ENCODE measurements at regions of chr12 and their contacts with region 1.

Region 1: DNA sequence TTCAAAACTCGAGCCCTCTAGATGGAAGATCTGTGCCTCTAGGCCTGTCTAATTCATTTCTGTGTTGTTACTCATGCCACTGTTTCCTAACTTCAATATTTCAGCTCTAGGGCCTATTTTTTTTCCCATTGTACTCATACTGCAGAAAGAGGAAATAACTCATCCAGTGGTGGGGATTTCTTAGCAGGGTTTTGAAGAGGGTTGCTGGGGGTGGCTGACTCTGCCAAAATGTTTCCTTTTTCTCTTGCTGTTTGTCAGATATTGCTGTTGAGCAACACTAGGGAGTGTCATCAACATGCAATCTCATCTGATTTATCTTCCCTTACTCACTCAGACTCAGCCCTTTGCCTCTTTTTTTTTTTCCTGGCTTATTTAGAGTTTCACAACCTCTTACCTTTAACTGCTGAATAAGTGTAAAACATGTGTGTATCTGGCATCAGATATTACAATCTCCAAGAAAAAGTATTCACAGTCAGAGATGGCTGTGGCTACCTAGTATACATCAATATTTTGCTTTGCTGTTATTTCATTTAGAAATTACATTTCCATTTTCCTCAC is 189.5 kb downstream of the DUSP6 start:
- DNase-seq: peak; percentile 59
- H3K4me3 Mint-ChIP-seq: no peak overlapping the region
- H3K27ac Mint-ChIP-seq: no peak overlapping the region
- H3K4me1 Mint-ChIP-seq: peaks cover 23% of the 10 kb centered on the region
- H3K27me3 Mint-ChIP-seq: no peaks in the 10 kb centered on the region

Region 2: DNA sequence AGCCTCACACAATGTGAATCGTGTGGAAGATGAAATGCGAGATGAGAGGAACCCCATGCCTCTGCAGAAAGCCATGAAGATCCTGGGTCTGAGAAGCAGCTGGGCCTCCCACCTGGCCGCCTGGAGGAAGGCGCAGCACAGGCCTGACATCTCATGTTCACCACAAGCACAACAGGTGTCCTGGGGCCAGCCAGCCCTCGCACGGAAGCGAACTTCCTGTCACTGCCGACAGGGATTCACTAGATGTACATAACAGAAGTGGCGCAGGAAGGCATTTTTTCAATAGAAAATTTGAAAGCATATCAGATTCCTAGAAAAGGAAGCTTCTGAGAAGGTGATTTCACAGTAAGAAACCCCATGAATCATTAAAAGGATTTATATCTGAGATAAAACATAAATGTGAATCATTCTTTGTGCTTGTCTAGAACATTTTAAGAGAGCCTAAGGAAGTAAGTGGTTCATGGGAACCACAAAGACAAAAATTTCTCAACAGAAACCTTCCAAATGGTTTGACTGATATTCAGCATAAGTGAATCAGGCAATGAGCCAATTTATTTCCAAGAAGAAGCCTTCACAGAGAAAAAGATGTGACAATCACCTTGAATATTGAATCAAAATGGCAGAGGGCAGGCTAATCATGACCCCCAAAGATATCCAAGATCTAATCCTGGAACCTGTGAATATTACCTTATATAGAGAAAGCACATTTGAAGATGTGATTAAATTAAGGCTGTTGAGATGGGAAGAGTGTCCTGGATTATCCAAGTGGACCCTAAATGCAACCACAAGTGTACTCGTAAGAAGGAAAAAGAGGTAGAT is 122.4 kb before region 1 on chr12:
- intact Hi-C with region 1: loop called (anchors 1 kb)
- DNase-seq: peak; percentile 79
- H3K4me3 Mint-ChIP-seq: peak overlapping the region; percentile 61
- H3K27ac Mint-ChIP-seq: peak overlapping the region; percentile 95
- H3K4me1 Mint-ChIP-seq: peaks cover 65% of the 10 kb centered on the region
- H3K27me3 Mint-ChIP-seq: no peaks in the 10 kb centered on the region

Region 3: DNA sequence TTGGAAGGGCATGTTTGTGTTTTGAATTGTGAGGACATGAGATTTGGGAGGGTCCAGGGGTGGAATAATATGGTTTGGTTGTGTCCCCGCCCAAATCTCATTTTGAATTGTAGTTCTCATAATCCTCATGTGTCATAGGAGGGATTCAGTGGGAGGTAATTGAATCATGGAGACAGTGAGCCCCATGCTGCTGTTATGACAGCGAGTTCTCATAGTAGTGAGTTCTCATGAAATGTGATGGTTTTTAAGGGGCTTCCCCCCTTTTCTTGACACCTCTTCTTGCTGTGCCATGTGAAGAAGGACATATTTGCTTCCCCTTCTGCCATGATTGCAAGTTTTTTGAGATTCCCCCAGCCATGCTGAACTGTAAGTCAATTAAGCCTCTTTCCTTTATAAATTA is 70.5 kb before region 1 on chr12:
- intact Hi-C with region 1: loop called (anchors 2 kb)
- DNase-seq: no peak
- H3K4me3 Mint-ChIP-seq: no peak overlapping the region
- H3K27ac Mint-ChIP-seq: peak overlapping the region; percentile 25
- H3K4me1 Mint-ChIP-seq: no peaks in the 10 kb centered on the region
- H3K27me3 Mint-ChIP-seq: no peaks in the 10 kb centered on the region

Region 4: DNA sequence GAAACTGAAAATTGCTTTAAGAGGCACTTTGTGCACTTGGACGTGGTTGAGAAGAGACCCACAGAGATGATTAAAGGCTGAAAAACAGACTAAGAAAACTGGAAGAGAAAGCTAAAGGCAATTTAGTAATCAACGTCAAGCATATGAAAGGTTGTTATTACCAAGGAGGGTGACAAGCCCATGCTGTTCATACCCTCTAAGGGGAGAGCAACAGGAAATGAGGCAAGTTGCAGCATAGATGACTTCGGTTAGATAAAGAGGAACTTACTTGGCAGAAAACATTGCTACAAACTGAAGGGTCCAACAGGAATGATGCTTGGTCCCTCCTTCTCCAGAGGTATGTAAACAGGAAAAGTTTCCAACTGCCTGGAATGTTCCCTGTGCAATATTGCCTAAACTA is 81.8 kb after region 1 on chr12:
- intact Hi-C with region 1: loop called (anchors 1 kb)
- DNase-seq: peak; percentile 45
- H3K4me3 Mint-ChIP-seq: peak overlapping the region; percentile 32
- H3K27ac Mint-ChIP-seq: peak overlapping the region; percentile 84
- H3K4me1 Mint-ChIP-seq: peaks cover 53% of the 10 kb centered on the region
- H3K27me3 Mint-ChIP-seq: no peaks in the 10 kb centered on the region

Region 5: GRCh38 chr12:89352492-89353187 is 189.9 kb after region 1 on chr12 and contains the start of gene DUSP6:
- intact Hi-C with region 1: loop called (anchors 1 kb)
- DNase-seq: peak; percentile 92
- H3K4me3 Mint-ChIP-seq: peak within 1 kb of the TSS; percentile 98
- H3K27ac Mint-ChIP-seq: peak within 1 kb of the TSS; percentile 97
- H3K4me1 Mint-ChIP-seq: peaks cover 46% of the 10 kb centered on the region
- H3K27me3 Mint-ChIP-seq: peaks cover 3% of the 10 kb centered on the region
- total RNA-seq, gene DUSP6: 108 and 115 TPM in 2 replicates

Region 6: DNA sequence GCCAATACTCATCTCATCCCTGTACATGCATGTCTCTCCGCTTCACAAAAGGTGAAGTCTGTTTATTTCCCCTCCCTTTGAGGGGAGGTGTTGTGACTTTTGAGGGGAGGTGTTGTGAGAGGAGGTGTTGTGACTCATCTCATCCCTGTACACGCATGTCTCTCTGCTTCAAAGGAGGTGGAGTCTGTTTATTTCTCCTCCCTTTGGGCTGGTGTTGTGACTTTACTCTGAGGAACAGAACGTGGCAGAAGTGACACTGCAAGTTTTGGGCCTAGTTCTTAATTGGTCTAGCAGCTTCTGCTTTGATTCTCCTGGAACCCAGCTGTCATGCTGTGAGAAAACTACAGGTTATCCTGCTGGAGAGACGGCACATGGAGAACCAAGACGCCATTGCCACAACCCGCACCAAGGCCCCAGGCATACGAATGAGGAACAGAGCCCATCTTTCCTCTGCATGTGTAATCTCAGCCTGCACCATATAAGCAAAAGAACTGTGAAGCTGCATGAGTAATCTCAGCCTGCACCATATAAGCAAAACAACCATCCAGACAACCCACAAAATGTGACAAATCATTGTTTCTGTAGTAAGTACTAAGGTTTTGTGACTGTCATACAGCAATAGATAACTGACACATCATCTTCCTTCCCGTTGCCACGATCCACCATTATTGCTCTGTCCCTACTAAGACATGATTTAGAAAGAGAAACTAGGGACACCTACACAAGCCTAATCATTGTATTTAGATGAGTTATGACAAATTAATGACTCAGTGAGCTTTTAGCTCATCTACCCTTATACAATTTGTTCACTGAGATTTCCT is 331.8 kb after region 1 on chr12:
- intact Hi-C with region 1: loop called (anchors 1 kb)
- DNase-seq: peak; percentile 16
- H3K4me3 Mint-ChIP-seq: peak overlapping the region; percentile 50
- H3K27ac Mint-ChIP-seq: peak overlapping the region; percentile 92
- H3K4me1 Mint-ChIP-seq: peaks cover 34% of the 10 kb centered on the region
- H3K27me3 Mint-ChIP-seq: no peaks in the 10 kb centered on the region

Region 7: GRCh38 chr12:89862511-89863179 is 699.9 kb after region 1 on chr12:
- intact Hi-C with region 1: loop called (anchors 5 kb)
- DNase-seq: peak; percentile 44
- H3K4me3 Mint-ChIP-seq: peak overlapping the region; percentile 76
- H3K27ac Mint-ChIP-seq: peak overlapping the region; percentile 95
- H3K4me1 Mint-ChIP-seq: peaks cover 60% of the 10 kb centered on the region
- H3K27me3 Mint-ChIP-seq: no peaks in the 10 kb centered on the region